Ovary (tissue), 10 donors: ENCODE measurements at regions of chr22 and their contacts with region 1.

Region 1: GRCh38 chr22:50326959-50327710 is at the start of gene DENND6B:
- DNase-seq: peak; percentile 76 to 90 (median 86)
- H3K4me3 ChIP-seq: peak within 1 kb of the TSS; percentile 44
- H3K27ac ChIP-seq: peak within 1 kb of the TSS; percentile 87 to 89
- H3K4me1 ChIP-seq: peaks cover 4% of the 10 kb centered on the region
- H3K27me3 ChIP-seq: no peaks in the 10 kb centered on the region
- CTCF ChIP-seq: peak in 2 of 3 donors; percentile 75 to 82
- EP300 ChIP-seq: no peak
- POLR2A ChIP-seq: peak; percentile 74
- total RNA-seq, gene DENND6B: 2.6 to 17.3 (median 7.4) TPM

Region 2: GRCh38 chr22:50276143-50276542 is 51.0 kb before region 1 on chr22:
- intact Hi-C with region 1: loop called (anchors 2 to 5 kb)
- DNase-seq: peak in 3 of 5 donors; percentile 50 to 72 (median 67)
- H3K4me3 ChIP-seq: no peak overlapping the region
- H3K27ac ChIP-seq: no peak overlapping the region
- H3K4me1 ChIP-seq: peaks cover 2% of the 10 kb centered on the region
- H3K27me3 ChIP-seq: no peaks in the 10 kb centered on the region
- CTCF ChIP-seq: no peak
- EP300 ChIP-seq: no peak
- POLR2A ChIP-seq: no peak

Region 3: GRCh38 chr22:50293441-50294318 is 33.5 kb before region 1 on chr22:
- intact Hi-C with region 1: loop called in 1 of 4 experiments (anchors 5 kb)
- DNase-seq: peak in 4 of 5 donors; percentile 68 to 85 (median 73)
- H3K4me3 ChIP-seq: peak overlapping the region; percentile 22
- H3K27ac ChIP-seq: peak overlapping the region; percentile 61 to 72
- H3K4me1 ChIP-seq: peaks cover 30% of the 10 kb centered on the region
- H3K27me3 ChIP-seq: no peaks in the 10 kb centered on the region
- CTCF ChIP-seq: no peak
- EP300 ChIP-seq: no peak
- POLR2A ChIP-seq: no peak

Region 4: DNA sequence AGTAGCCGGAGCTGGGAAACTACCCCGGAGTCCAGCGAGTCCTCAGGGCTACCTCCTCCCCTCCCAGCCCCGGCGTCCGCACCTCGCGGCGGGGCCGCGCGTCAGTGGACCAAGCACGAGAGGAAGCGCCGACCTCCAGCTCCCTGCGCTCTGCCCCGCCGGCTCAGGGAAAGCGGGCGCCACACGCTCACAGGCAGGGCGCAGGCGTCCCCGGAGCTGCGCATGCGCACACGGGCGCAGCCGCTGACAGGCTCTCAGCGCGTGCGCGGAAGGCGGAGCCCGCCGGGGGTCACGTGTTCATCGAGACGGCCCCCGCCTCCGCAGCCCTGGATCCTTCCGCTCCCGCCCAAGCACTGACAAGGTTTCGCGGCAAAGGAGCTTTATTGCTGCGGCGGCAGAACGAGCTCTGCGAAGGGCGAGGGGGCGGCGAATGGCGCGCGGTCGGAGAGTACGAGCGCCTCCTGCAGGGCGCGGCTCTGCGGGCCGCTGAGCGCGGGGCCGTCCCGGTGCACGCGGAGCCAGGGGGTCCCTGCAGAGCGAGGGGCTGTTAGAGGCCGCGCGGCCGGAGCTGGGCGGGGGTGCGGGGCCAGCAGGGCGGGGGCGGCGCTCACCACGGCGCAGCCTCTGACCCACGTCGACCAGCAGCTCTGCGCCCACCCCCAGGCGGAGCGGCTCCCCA is 198.4 kb after region 1 on chr22 and contains the start of gene SCO2:
- intact Hi-C with region 1: no loop called
- DNase-seq: peak; percentile 96 to 98 (median 98)
- H3K4me3 ChIP-seq: peak within 1 kb of the TSS; percentile 55
- H3K27ac ChIP-seq: peak within 1 kb of the TSS; percentile 29 to 87
- H3K4me1 ChIP-seq: peaks cover 15% of the 10 kb centered on the region
- H3K27me3 ChIP-seq: no peaks in the 10 kb centered on the region
- CTCF ChIP-seq: peak; percentile 14 to 65 (median 58)
- EP300 ChIP-seq: no peak
- POLR2A ChIP-seq: peak; percentile 56
- total RNA-seq, gene SCO2: 0.73 to 5.1 (median 2.6) TPM in 4 of 7 donors, not detected in the others